ENCODE measurements at regions of chr11 and their contacts with region 1.

Region 1: GRCh38 chr11:88552377-88553062 is 215.0 kb upstream of the CTSC start:
- DNase-seq: peak; percentile 79
- ATAC-seq: peak; percentile 82
- H3K4me3 Mint-ChIP-seq: no peak overlapping the region
- H3K27ac Mint-ChIP-seq: no peak overlapping the region
- H3K4me1 Mint-ChIP-seq: peaks cover 4% of the 10 kb centered on the region
- H3K27me3 Mint-ChIP-seq: no peaks in the 10 kb centered on the region

Region 2: GRCh38 chr11:87722756-87723565 is 829.6 kb before region 1 on chr11:
- CTCF ChIA-PET with region 1: interaction called, 5 read pairs
- POLR2A ChIA-PET with region 1: no interaction called
- intact Hi-C with region 1: loop called in 1 of 2 experiments (anchors 10 kb)
- DNase-seq: peak; percentile 21
- ATAC-seq: no peak
- H3K4me3 Mint-ChIP-seq: no peak overlapping the region
- H3K27ac Mint-ChIP-seq: no peak overlapping the region
- H3K4me1 Mint-ChIP-seq: no peaks in the 10 kb centered on the region
- H3K27me3 Mint-ChIP-seq: peaks cover 3% of the 10 kb centered on the region

Region 3: DNA sequence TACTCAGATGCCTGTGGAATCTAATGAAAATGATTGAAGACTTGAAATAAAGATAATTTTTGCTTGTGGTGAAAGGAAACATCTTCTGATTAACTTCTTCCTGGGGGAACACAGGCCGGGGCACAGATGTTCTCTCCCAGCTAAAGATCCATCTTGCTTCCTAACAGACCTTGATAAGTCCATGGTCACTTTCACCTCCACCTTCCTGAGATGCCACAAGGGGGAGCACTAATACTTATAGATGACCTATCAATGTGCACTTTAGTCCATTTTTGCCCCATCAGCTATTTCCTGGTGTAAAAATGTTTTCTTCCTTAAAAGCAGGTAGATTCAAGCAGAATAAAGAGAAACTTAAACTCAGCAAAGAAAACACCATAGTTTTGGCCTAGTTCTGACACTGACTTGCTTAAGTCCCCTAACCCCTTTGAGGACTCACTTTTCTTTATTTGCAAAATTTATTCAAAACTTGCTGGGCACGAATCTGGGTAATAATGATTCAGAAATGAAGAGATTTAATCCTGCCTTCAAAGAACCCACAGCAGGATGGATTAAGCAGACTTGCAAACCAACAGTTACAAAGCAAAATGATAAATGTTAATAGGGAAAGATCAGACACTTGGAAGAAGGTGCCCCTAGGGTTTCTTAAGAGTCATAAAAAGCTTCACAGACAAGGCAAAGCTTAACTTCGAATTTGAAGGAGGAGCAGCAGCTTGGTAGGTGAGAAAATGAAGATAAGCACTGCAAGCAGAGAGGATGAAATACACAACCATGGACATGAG is 535.9 kb before region 1 on chr11:
- CTCF ChIA-PET with region 1: interaction called, 57 read pairs
- POLR2A ChIA-PET with region 1: no interaction called
- intact Hi-C with region 1: loop called in 1 of 2 experiments (anchors 1 kb)
- DNase-seq: peak; percentile 72
- ATAC-seq: peak; percentile 69
- H3K4me3 Mint-ChIP-seq: no peak overlapping the region
- H3K27ac Mint-ChIP-seq: no peak overlapping the region
- H3K4me1 Mint-ChIP-seq: no peaks in the 10 kb centered on the region
- H3K27me3 Mint-ChIP-seq: no peaks in the 10 kb centered on the region

Region 4: GRCh38 chr11:88103337-88104206 is 448.9 kb before region 1 on chr11:
- CTCF ChIA-PET with region 1: interaction called, 10 read pairs
- POLR2A ChIA-PET with region 1: no interaction called
- intact Hi-C with region 1: no loop called
- DNase-seq: peak; percentile 51
- ATAC-seq: peak; percentile 81
- H3K4me3 Mint-ChIP-seq: no peak overlapping the region
- H3K27ac Mint-ChIP-seq: no peak overlapping the region
- H3K4me1 Mint-ChIP-seq: no peaks in the 10 kb centered on the region
- H3K27me3 Mint-ChIP-seq: peaks cover 2% of the 10 kb centered on the region

Region 5: GRCh38 chr11:88231894-88232482 is 320.5 kb before region 1 on chr11:
- CTCF ChIA-PET with region 1: interaction called, 15 read pairs
- POLR2A ChIA-PET with region 1: no interaction called
- intact Hi-C with region 1: no loop called
- DNase-seq: peak; percentile 32
- ATAC-seq: peak; percentile 80
- H3K4me3 Mint-ChIP-seq: no peak overlapping the region
- H3K27ac Mint-ChIP-seq: no peak overlapping the region
- H3K4me1 Mint-ChIP-seq: no peaks in the 10 kb centered on the region
- H3K27me3 Mint-ChIP-seq: no peaks in the 10 kb centered on the region

Region 6: DNA sequence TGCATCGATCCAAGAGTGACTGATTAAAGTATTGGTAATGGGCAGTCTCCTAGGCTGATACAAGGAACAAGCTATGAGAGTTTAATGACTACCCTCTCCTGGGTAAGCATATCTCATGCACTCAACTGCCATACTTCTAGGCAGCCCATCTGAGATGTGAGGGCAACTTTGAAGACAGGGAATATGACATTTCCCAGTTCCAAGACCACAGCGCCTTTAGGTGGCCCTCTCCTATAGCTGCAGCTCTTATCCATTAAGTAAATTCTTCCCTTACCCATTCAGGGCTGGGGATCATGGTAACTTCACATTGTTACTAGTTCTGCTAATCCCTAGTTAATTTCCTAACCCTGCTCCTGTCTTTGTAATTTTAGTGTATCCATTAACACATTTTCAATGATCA is 57.7 kb before region 1 on chr11:
- CTCF ChIA-PET with region 1: no interaction called
- POLR2A ChIA-PET with region 1: no interaction called
- intact Hi-C with region 1: no loop called
- DNase-seq: no peak
- ATAC-seq: no peak
- H3K4me3 Mint-ChIP-seq: no peak overlapping the region
- H3K27ac Mint-ChIP-seq: no peak overlapping the region
- H3K4me1 Mint-ChIP-seq: no peaks in the 10 kb centered on the region
- H3K27me3 Mint-ChIP-seq: peaks cover 2% of the 10 kb centered on the region

Measured in activated CD4-positive, alpha-beta T cell treated with anti-CD3 and anti-CD28 coated beads for 36 hours (primary cell).